Gastrocnemius medialis (tissue), 4 donors: ENCODE measurements at regions of chr16 and their contacts with region 1.

Region 1: GRCh38 chr16:12758031-12758701 is 45.5 kb downstream of the CPPED1 start:
- DNase-seq: no peak
- ATAC-seq: no peak
- H3K4me3 ChIP-seq: no peak overlapping the region
- H3K27ac ChIP-seq: no peak overlapping the region
- H3K4me1 ChIP-seq: no peaks in the 10 kb centered on the region
- H3K27me3 ChIP-seq: no peaks in the 10 kb centered on the region
- CTCF ChIP-seq: no peak
- POLR2A ChIP-seq: no peak

Region 2: GRCh38 chr16:12661656-12662172 is 96.5 kb before region 1 on chr16:
- in situ Hi-C with region 1: loop called in 1 of 4 experiments (anchors 25 kb)
- intact Hi-C with region 1: no loop called
- DNase-seq: no peak
- ATAC-seq: no peak
- H3K4me3 ChIP-seq: no peak overlapping the region
- H3K27ac ChIP-seq: no peak overlapping the region
- H3K4me1 ChIP-seq: no peaks in the 10 kb centered on the region
- H3K27me3 ChIP-seq: no peaks in the 10 kb centered on the region
- CTCF ChIP-seq: no peak
- POLR2A ChIP-seq: no peak